CD4-positive, alpha-beta memory T cell (primary cell): ENCODE measurements at regions of chr2 and their contacts with region 1.

Region 1: GRCh38 chr2:225052703-225053102 is 10.4 kb upstream of the DOCK10 start:
- DNase-seq: peak; percentile 50 to 72 (median 58)
- H3K4me3 ChIP-seq: peak overlapping the region in 1 of 2 donors; percentile 26
- H3K4me3 Mint-ChIP-seq: peak overlapping the region in 7 of 8 donors; percentile 54 to 72 (median 62)
- H3K27ac ChIP-seq: peak overlapping the region; percentile 27
- H3K27ac Mint-ChIP-seq: peak overlapping the region; percentile 6 to 82 (median 31)
- H3K4me1 ChIP-seq: peaks cover 68% of the 10 kb centered on the region
- H3K4me1 Mint-ChIP-seq: peaks cover 46 to 72% (median 57%) of the 10 kb centered on the region in 4 donors
- H3K27me3 ChIP-seq: no peaks in the 10 kb centered on the region
- H3K27me3 Mint-ChIP-seq: no peaks in the 10 kb centered on the region

Region 2: GRCh38 chr2:225025917-225026571 is 26.7 kb before region 1 on chr2:
- CTCF ChIA-PET with region 1: interaction called, 3 read pairs
- POLR2A ChIA-PET with region 1: interaction called, 12 read pairs
- intact Hi-C with region 1: no loop called
- DNase-seq: peak in 3 of 5 donors; percentile 22 to 55 (median 30)
- H3K4me3 ChIP-seq: no peak overlapping the region
- H3K4me3 Mint-ChIP-seq: peak overlapping the region; percentile 32 to 70 (median 39)
- H3K27ac ChIP-seq: no peak overlapping the region
- H3K27ac Mint-ChIP-seq: peak overlapping the region; percentile 13 to 86 (median 53)
- H3K4me1 ChIP-seq: peaks cover 94% of the 10 kb centered on the region
- H3K4me1 Mint-ChIP-seq: peaks cover 59 to 84% (median 73%) of the 10 kb centered on the region in 4 donors
- H3K27me3 ChIP-seq: no peaks in the 10 kb centered on the region
- H3K27me3 Mint-ChIP-seq: no peaks in the 10 kb centered on the region

Region 3: DNA sequence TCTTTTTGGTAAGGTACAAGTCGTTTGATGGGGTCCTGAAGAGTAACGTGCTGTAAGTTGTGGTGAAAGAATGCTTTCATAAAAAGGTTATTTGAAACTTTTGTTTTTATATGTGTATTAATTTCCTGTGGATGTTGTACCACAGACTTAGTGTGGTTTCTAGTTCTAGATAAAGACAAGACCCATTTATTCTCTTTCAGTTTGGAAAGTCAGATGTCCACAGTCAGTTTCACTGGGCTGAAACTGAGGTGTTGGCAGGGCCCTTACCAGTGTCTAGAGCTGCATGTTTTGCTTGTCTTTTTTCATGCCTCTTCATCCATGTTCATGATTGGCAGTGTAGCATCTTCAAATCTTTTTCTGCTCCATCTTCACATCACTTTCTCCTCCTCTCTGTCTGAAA is 11.7 kb after region 1 on chr2:
- CTCF ChIA-PET with region 1: interaction called, 9 read pairs
- POLR2A ChIA-PET with region 1: interaction called, 12 read pairs
- intact Hi-C with region 1: loop called (anchors 1 kb)
- DNase-seq: no peak
- H3K4me3 ChIP-seq: no peak overlapping the region
- H3K4me3 Mint-ChIP-seq: peak overlapping the region in 7 of 8 donors; percentile 14 to 68 (median 58)
- H3K27ac ChIP-seq: no peak overlapping the region
- H3K27ac Mint-ChIP-seq: peak overlapping the region; percentile 1 to 91 (median 64)
- H3K4me1 ChIP-seq: peaks cover 22% of the 10 kb centered on the region
- H3K4me1 Mint-ChIP-seq: peaks cover 29 to 44% (median 34%) of the 10 kb centered on the region in 4 donors
- H3K27me3 ChIP-seq: no peaks in the 10 kb centered on the region
- H3K27me3 Mint-ChIP-seq: peaks cover 0 to under 1% of the 10 kb centered on the region in 2 donors